Activated CD4-positive, alpha-beta memory T cell treated with anti-CD3 and anti-CD28 coated beads, Interleukin-2, amount 10 ng/mL, durations not matched to agents 7 days and 5 days (primary cell): ENCODE measurements at regions of chr19 and their contacts with region 1.

Region 1: GRCh38 chr19:4909897-4910593 is 744 bp downstream of the UHRF1 start:
- DNase-seq: peak; percentile 96
- H3K4me3 Mint-ChIP-seq: peak overlapping the region; percentile 83
- H3K27ac Mint-ChIP-seq: peak overlapping the region; percentile 90
- H3K4me1 Mint-ChIP-seq: peaks cover 45% of the 10 kb centered on the region
- H3K27me3 Mint-ChIP-seq: no peaks in the 10 kb centered on the region

Region 2: GRCh38 chr19:4867534-4868285 is 42.3 kb before region 1 on chr19 and contains the start of gene PLIN3:
- CTCF ChIA-PET with region 1: interaction called, 59 read pairs
- POLR2A ChIA-PET with region 1: interaction called, 19 read pairs
- DNase-seq: peak; percentile 95
- H3K4me3 Mint-ChIP-seq: peak within 1 kb of the TSS; percentile 76
- H3K27ac Mint-ChIP-seq: peak within 1 kb of the TSS; percentile 54
- H3K4me1 Mint-ChIP-seq: peaks cover 39% of the 10 kb centered on the region
- H3K27me3 Mint-ChIP-seq: peaks cover 9% of the 10 kb centered on the region
- total RNA-seq, gene PLIN3: 36.3 to 40.5 TPM

Region 3: DNA sequence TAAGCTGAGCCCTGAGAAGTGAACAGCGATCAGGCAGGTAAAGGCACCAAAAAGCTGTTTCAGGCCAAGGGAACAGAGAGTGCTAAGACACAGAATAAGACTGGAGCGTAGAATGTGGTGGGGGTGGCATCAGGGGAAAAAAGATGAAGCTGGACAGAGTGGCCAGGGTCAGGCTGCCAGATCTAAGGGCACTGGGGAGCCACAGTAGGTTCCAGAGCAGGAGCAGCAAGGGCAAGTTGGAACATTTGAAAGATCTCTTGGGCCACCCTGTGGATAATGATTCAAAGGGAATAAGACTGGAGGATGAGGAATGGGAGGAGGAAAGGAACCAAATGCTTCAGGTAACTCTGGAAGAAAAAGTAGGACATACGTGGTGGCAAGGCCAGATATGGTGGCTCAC is 36.1 kb before region 1 on chr19:
- CTCF ChIA-PET with region 1: interaction called, 59 read pairs
- POLR2A ChIA-PET with region 1: interaction called, 19 read pairs
- DNase-seq: no peak
- H3K4me3 Mint-ChIP-seq: no peak overlapping the region
- H3K27ac Mint-ChIP-seq: no peak overlapping the region
- H3K4me1 Mint-ChIP-seq: peaks cover 20% of the 10 kb centered on the region
- H3K27me3 Mint-ChIP-seq: peaks cover 14% of the 10 kb centered on the region

Region 4: GRCh38 chr19:4968462-4969291 is 58.6 kb after region 1 on chr19 and contains the start of gene KDM4B:
- CTCF ChIA-PET with region 1: interaction called, 12 read pairs
- POLR2A ChIA-PET with region 1: interaction called, 65 read pairs
- DNase-seq: peak; percentile 99
- H3K4me3 Mint-ChIP-seq: peak within 1 kb of the TSS; percentile 86
- H3K27ac Mint-ChIP-seq: peak within 1 kb of the TSS; percentile 88
- H3K4me1 Mint-ChIP-seq: peaks cover 36% of the 10 kb centered on the region
- H3K27me3 Mint-ChIP-seq: no peaks in the 10 kb centered on the region
- total RNA-seq, gene KDM4B: 46.3 to 50.9 TPM

Region 5: GRCh38 chr19:5031231-5032100 is 121.4 kb after region 1 on chr19:
- CTCF ChIA-PET with region 1: interaction called, 10 read pairs
- POLR2A ChIA-PET with region 1: interaction called, 4 read pairs
- DNase-seq: peak; percentile 83
- H3K4me3 Mint-ChIP-seq: no peak overlapping the region
- H3K27ac Mint-ChIP-seq: no peak overlapping the region
- H3K4me1 Mint-ChIP-seq: no peaks in the 10 kb centered on the region
- H3K27me3 Mint-ChIP-seq: no peaks in the 10 kb centered on the region